ENCODE measurements at regions of chr1 and their contacts with region 1.

Region 1: GRCh38 chr1:229661022-229661877 is 35.2 kb downstream of the URB2 start:
- DNase-seq: peak; percentile 31
- ATAC-seq: peak; percentile 91
- H3K4me3 ChIP-seq: no peak overlapping the region
- H3K27ac ChIP-seq: no peak overlapping the region
- H3K4me1 ChIP-seq: peaks cover 15% of the 10 kb centered on the region
- H3K27me3 ChIP-seq: no peaks in the 10 kb centered on the region
- CTCF ChIP-seq: peak; percentile 93 to 95 (median 93)
- EP300 ChIP-seq: no peak
- POLR2A ChIP-seq: no peak
- RAD21 ChIP-seq: peak; percentile 86

Region 2: DNA sequence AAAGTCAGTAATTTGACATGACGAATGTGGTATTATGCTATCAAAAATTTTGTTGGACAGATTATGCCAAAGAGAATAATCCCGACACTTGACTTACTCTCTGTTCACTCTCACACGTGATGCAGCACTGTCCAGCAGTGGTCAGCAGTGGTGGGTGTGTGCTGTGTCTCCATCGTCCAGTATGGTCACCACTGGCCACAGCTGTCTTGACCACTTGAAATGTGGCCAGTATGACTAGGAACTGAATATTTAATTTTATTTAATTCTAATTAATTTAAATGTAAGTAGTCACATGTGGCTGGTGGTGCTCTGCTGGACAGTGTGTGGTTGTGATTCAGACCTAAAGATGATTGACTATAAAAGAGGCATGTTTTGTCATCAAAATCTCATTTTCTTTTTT is 11.2 kb before region 1 on chr1:
- CTCF ChIA-PET with region 1: interaction called, 20 read pairs
- POLR2A ChIA-PET with region 1: no interaction called
- RAD21 ChIA-PET with region 1: no interaction called
- SMC1A ChIA-PET with region 1: no interaction called
- in situ Hi-C with region 1: no loop called
- intact Hi-C with region 1: no loop called
- DNase-seq: no peak
- ATAC-seq: no peak
- H3K4me3 ChIP-seq: no peak overlapping the region
- H3K27ac ChIP-seq: no peak overlapping the region
- H3K4me1 ChIP-seq: no peaks in the 10 kb centered on the region
- H3K27me3 ChIP-seq: no peaks in the 10 kb centered on the region
- CTCF ChIP-seq: no peak
- EP300 ChIP-seq: no peak
- POLR2A ChIP-seq: no peak
- RAD21 ChIP-seq: no peak

Region 3: DNA sequence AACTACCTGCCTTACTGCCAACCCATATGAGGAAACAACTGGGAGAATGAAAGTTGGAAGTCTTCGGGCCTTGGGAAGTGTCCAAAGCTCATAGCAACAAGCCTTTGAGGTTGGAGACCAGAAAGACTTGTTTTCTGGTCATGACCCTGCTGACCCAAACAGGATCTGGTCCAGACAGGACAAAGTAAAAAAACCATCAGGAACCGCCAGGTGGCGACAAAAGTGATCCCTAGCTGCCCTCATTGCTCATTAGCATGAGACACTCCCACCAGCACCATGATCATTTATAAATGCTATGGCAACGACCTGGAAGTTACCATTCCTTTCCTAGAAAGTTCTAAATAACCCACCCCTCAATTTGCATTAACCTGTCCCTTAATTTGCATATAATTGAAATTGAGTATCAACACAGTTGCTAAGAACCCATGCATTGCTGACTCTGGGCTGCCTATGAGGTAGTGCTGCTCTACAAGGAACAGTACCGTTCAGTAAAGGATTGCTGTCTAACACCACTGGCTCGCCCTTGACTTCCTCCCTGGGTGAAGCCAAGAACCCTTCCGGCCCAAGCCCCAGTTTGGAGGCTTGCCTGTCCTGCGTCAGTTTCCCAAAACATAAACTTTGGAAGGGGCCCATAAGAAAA is 53.8 kb after region 1 on chr1:
- CTCF ChIA-PET with region 1: interaction called, 13 read pairs
- POLR2A ChIA-PET with region 1: no interaction called
- RAD21 ChIA-PET with region 1: interaction called, 6 read pairs
- SMC1A ChIA-PET with region 1: interaction called, 4 read pairs
- in situ Hi-C with region 1: no loop called
- intact Hi-C with region 1: no loop called
- DNase-seq: no peak
- ATAC-seq: peak; percentile 96
- H3K4me3 ChIP-seq: no peak overlapping the region
- H3K27ac ChIP-seq: no peak overlapping the region
- H3K4me1 ChIP-seq: no peaks in the 10 kb centered on the region
- H3K27me3 ChIP-seq: no peaks in the 10 kb centered on the region; a peak in 1 of 4 replicates
- CTCF ChIP-seq: peak; percentile 56 to 68 (median 62)
- EP300 ChIP-seq: no peak
- POLR2A ChIP-seq: no peak
- RAD21 ChIP-seq: peak; percentile 62

Region 4: DNA sequence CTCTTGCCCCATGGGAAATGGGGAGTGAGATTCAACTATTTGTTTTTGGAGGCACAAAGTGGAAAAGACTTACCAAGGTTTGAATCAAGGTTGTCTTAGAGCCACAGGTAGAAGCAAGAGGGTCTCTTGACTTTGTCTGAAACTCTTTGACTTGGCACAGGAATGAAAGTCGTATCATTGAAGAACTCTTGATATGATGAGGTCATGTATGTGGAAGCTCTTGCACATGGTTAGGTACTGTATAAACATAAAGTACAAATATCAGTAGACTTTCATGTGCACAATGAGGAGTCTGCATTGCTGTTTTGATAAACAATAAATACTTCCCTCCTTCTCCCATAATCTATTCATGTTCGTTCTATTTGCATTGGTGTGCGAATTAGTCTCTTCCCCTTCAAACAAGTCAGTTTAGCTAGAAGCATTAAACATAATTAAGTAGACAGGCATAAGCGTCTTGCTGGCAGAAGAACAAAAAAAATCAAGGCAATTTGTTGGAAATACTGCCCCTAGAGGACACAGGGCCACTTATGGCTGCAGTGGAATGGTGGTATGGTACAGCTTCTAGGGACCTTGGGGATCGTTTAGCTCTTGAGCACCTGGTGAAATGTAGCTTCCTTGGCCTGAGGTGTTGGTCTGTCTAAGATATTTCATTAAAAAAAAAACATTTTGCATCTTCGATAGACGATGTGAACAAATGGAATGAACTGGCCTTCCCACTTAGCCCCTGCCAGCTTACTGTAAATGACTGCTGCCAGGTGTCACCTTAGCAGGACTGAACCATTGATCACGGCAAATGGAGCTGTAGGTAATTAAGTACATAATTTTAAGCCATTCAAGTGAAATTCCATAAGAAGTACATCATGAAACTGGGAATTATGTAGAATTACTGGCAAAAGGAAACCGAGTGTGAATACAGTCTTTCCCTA is 187.8 kb after region 1 on chr1:
- CTCF ChIA-PET with region 1: interaction called, 7 read pairs
- POLR2A ChIA-PET with region 1: no interaction called
- RAD21 ChIA-PET with region 1: interaction called, 4 read pairs
- SMC1A ChIA-PET with region 1: no interaction called
- in situ Hi-C with region 1: no loop called
- intact Hi-C with region 1: loop called (anchors 10 kb)
- DNase-seq: no peak
- ATAC-seq: peak; percentile 84
- H3K4me3 ChIP-seq: no peak overlapping the region
- H3K27ac ChIP-seq: no peak overlapping the region
- H3K4me1 ChIP-seq: no peaks in the 10 kb centered on the region
- H3K27me3 ChIP-seq: no peaks in the 10 kb centered on the region
- CTCF ChIP-seq: peak; percentile 45 to 64 (median 53)
- EP300 ChIP-seq: no peak
- POLR2A ChIP-seq: no peak
- RAD21 ChIP-seq: peak; percentile 25; the same call in 1 of the 2 replicates

Region 5: DNA sequence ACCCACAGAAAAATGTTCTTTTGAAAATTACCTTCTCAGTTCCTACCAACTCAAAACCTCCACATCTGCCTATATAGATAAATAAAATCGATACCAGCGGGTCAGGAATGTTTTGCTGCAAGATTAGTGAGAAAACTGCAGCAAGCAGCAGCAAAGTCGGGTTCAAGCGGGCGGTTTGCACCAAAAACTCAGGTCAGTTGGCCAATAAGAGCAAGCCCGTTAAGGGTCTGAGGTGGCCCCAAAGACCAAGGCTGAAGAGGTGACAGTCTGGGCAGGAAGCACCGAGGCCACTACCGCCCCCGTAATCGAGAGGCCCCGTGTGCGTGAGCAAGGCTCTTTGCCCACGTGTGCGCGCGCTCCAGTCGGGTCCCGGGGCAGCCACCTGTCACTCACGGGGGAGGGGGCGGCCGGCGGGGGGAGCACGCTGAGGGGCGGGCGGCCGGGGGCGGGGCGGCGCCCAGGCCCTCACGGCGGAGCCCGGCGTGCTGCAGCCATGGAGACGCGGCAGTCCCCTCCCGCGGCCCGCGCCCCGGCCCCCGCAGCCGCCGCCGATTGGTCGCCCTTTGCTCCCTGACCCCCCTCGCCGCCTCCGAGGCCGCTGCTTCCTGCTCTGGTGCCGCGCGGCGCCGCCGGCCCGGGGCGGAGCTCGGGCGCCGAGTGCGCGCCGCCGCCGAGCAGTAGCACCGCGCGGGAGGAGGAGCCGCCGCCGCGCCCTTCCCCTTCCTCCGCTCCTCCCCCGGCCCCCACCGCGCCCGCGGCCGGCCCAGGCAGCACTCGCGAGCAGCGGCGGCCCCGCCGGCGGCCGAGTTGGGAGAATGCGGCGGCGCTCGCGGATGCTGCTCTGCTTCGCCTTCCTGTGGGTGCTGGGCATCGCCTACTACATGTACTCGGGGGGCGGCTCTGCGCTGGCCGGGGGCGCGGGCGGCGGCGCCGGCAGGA is 405.5 kb after region 1 on chr1 and contains the start of gene GALNT2:
- CTCF ChIA-PET with region 1: interaction called, 4 read pairs
- POLR2A ChIA-PET with region 1: no interaction called
- RAD21 ChIA-PET with region 1: no interaction called
- SMC1A ChIA-PET with region 1: interaction called, 5 read pairs
- in situ Hi-C with region 1: no loop called
- intact Hi-C with region 1: loop called (anchors 5 kb)
- DNase-seq: peak; percentile 48
- ATAC-seq: peak; percentile 83
- H3K4me3 ChIP-seq: peak within 1 kb of the TSS; percentile 96
- H3K27ac ChIP-seq: peak within 1 kb of the TSS; percentile 77
- H3K4me1 ChIP-seq: no peaks in the 10 kb centered on the region; the same call in 1 of the 2 replicates
- H3K27me3 ChIP-seq: no peaks in the 10 kb centered on the region
- CTCF ChIP-seq: no peak
- EP300 ChIP-seq: peak; percentile 36 to 56; a peak in 1 of 4 replicates
- POLR2A ChIP-seq: peak; percentile 78
- RAD21 ChIP-seq: peak; percentile 20; the same call in 1 of the 2 replicates
- polyA plus RNA-seq, gene GALNT2: 0.52 to 1.2 TPM

Region 6: DNA sequence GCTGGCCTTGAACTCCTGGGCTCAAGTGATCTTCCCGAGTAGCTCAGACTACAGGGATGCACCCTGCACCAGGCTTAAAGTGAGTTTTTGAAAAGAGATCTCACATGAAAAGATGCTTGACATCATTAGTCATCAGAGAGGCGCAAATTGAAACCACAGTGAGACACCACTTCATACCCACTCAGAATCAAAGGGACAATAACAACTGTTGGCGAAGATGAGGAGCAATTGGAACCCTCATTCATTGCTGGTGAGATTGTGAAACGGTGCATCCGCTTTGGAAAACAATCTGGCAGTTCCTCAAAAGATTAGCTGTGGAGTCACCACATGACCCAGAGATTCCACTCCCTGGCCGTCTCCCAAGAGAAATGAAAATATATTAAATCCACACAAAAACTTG is 642.6 kb after region 1 on chr1:
- CTCF ChIA-PET with region 1: interaction called, 37 read pairs
- POLR2A ChIA-PET with region 1: no interaction called
- RAD21 ChIA-PET with region 1: interaction called, 17 read pairs
- SMC1A ChIA-PET with region 1: interaction called, 16 read pairs
- in situ Hi-C with region 1: no loop called
- intact Hi-C with region 1: no loop called
- DNase-seq: no peak
- ATAC-seq: no peak; the same call in 2 of the 3 replicates
- H3K4me3 ChIP-seq: no peak overlapping the region
- H3K27ac ChIP-seq: no peak overlapping the region
- H3K4me1 ChIP-seq: no peaks in the 10 kb centered on the region; the same call in 1 of the 2 replicates
- H3K27me3 ChIP-seq: no peaks in the 10 kb centered on the region
- CTCF ChIP-seq: no peak
- EP300 ChIP-seq: no peak
- POLR2A ChIP-seq: no peak
- RAD21 ChIP-seq: no peak

Region 7: DNA sequence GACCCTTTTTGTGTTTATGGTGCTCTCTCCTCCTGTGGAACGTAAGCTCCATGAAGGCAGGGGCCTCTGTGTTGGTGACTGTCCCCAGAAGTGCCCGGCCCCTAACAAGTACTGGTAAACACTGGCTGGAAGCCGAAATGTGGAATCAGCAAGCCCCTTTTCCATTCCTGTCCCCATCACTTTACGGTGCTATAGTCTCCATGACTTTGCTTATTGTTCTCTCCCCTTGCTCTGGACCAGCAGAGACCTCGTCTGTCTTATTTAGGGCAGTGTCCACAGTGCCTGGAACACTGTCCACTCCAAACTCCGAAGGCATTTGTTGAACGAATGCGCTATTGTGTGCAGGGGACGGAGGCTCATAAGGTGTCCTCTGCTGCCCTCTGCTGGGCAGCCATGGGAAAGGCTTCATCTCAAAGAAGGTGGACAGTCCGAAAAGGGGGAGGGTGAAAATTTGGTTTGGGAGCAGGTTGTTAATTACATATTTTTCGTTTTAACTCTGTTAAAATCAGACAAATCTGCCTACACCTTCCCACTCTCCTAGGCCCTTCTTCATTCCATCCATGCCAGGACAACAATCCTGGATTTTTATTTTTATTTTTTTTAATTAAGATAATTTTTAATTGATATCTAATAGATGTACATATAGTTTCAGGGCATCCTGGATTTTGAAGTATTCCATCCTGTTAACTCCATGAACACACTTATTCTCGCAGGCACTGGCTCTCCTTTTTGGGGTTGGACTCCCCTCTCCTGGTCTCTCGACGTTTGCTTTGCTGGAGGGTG is 649.3 kb after region 1 on chr1:
- CTCF ChIA-PET with region 1: interaction called, 37 read pairs
- POLR2A ChIA-PET with region 1: no interaction called
- RAD21 ChIA-PET with region 1: interaction called, 17 read pairs
- SMC1A ChIA-PET with region 1: interaction called, 16 read pairs
- in situ Hi-C with region 1: loop called (anchors 5 kb)
- intact Hi-C with region 1: loop called (anchors 1 kb)
- DNase-seq: peak; percentile 11
- ATAC-seq: peak; percentile 89
- H3K4me3 ChIP-seq: no peak overlapping the region
- H3K27ac ChIP-seq: no peak overlapping the region
- H3K4me1 ChIP-seq: no peaks in the 10 kb centered on the region; the same call in 1 of the 2 replicates
- H3K27me3 ChIP-seq: no peaks in the 10 kb centered on the region
- CTCF ChIP-seq: peak; percentile 89 to 94 (median 92)
- EP300 ChIP-seq: no peak
- POLR2A ChIP-seq: no peak
- RAD21 ChIP-seq: peak; percentile 99

Measured in GM12878 (cell line).